IMR-90 (cell line): ENCODE measurements at regions of chrX and their contacts with region 1.

Region 1: DNA sequence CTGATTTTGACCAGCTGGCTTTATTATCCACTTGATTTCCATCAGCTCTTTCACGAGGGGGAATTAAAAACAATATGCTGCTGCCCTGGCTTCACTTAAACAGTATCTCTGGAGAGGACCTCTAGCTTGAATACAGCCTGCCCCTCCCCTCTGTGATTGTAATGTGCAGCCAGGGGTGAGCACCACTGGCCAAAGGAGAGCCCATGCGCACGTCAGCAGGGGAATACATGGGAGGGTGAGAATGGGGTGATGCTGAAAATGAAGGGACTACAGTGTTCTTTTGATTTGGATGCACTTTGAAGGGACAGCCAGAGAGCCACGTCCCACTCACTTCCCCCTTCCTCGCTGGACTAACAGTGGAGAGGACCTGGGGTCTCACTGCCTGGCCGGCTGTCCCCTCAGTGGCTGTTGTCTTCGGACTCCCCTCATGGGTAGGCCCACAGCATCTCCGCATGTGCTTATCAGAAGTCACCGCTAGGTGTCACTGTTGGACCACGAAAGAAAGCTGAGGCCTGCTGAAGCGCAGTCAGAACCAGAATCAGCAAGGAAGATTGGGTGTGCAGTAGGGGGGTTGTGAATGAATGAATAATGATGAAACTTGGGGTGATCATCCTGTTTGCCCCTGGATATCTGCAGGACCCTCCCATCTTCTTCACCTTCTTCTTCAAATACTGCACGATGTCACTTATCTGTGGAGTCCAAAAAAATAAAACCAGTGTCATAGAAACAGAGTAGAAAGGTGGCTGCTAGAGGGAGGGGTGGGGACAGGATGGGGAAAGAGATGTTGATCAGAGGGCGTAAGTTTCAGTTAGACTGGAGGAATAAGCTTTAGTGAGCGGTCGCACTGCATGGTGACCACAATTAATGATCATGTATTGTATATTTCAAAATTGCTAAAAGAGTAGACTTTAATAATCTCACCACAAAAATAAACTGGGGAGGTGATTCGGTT is 32.8 kb downstream of the CLCN4 start:
- DNase-seq: peak; percentile 63
- ATAC-seq: peak; percentile 94
- H3K4me3 ChIP-seq: no peak overlapping the region
- H3K27ac ChIP-seq: no peak overlapping the region
- H3K4me1 ChIP-seq: no peaks in the 10 kb centered on the region
- H3K27me3 ChIP-seq: no peaks in the 10 kb centered on the region
- CTCF ChIP-seq: peak; percentile 79
- POLR2A ChIP-seq: no peak
- RAD21 ChIP-seq: peak; percentile 90

Region 2: DNA sequence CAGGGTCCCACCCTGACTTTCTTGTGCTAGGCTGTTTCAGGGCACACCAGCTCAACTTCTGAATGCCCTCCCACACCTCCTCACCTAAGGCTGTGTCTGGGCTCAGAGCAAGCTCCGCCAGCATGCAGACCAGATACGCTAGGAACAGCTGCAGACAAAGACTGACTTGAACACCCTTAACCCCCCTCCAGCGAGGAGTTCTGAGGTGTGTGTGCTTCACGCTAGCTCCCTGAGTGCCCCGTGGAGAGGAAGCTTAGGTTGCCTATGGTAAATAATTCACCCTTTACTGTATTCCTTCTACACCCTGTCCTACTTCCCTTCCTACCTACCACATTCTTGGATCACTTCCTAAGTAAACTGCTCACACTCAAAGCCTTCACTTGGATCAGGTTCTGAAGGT is 1610.0 kb before region 1 on chrX:
- CTCF ChIA-PET with region 1: no interaction called
- POLR2A ChIA-PET with region 1: no interaction called
- dilution Hi-C with region 1: no loop called
- in situ Hi-C with region 1: no loop called
- intact Hi-C with region 1: no loop called
- DNase-seq: no peak
- ATAC-seq: no peak
- H3K4me3 ChIP-seq: no peak overlapping the region
- H3K27ac ChIP-seq: no peak overlapping the region
- H3K4me1 ChIP-seq: no peaks in the 10 kb centered on the region
- H3K27me3 ChIP-seq: no peaks in the 10 kb centered on the region
- CTCF ChIP-seq: no peak
- POLR2A ChIP-seq: no peak
- RAD21 ChIP-seq: no peak

Region 3: DNA sequence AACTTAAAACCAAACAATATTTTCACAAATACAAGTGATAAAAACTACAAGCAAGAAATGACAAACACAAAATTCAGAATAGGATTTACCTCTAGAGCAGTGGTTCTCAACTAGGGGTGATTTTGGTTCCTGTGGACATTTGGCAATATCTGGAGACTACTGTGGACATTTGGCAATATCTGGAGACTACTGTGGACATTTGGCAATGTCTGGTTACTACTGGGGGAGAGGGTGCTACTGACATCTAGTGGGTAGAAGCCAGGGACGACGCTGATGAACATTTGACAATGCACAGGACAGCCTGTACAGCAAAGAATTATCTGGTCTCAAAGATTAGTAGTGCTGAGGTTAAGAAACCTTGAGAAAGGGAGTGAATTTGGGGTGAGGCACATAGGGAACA is 137.0 kb after region 1 on chrX:
- CTCF ChIA-PET with region 1: no interaction called
- POLR2A ChIA-PET with region 1: no interaction called
- dilution Hi-C with region 1: no loop called
- in situ Hi-C with region 1: no loop called
- intact Hi-C with region 1: loop called (anchors 1 kb)
- DNase-seq: peak; percentile 43
- ATAC-seq: peak; percentile 60
- H3K4me3 ChIP-seq: no peak overlapping the region
- H3K27ac ChIP-seq: no peak overlapping the region
- H3K4me1 ChIP-seq: peaks cover 2% of the 10 kb centered on the region; the same call in 1 of the 2 replicates
- H3K27me3 ChIP-seq: no peaks in the 10 kb centered on the region; the same call in 1 of the 2 replicates
- CTCF ChIP-seq: peak; percentile 46
- POLR2A ChIP-seq: no peak
- RAD21 ChIP-seq: peak; percentile 50

Region 4: GRCh38 chrX:10615931-10616775 is 426.6 kb after region 1 on chrX:
- CTCF ChIA-PET with region 1: interaction called, 7 read pairs
- POLR2A ChIA-PET with region 1: no interaction called
- dilution Hi-C with region 1: no loop called
- in situ Hi-C with region 1: loop called (anchors 10 kb)
- intact Hi-C with region 1: loop called (anchors 5 kb)
- DNase-seq: peak; percentile 58
- ATAC-seq: no peak
- H3K4me3 ChIP-seq: no peak overlapping the region
- H3K27ac ChIP-seq: peak overlapping the region; percentile 22; the same call in 1 of the 2 replicates
- H3K4me1 ChIP-seq: peaks cover 7% of the 10 kb centered on the region
- H3K27me3 ChIP-seq: no peaks in the 10 kb centered on the region
- CTCF ChIP-seq: peak; percentile 58
- POLR2A ChIP-seq: no peak
- RAD21 ChIP-seq: peak; percentile 64

Region 5: GRCh38 chrX:10722851-10723250 is 533.3 kb after region 1 on chrX:
- CTCF ChIA-PET with region 1: interaction called, 9 read pairs
- POLR2A ChIA-PET with region 1: no interaction called
- dilution Hi-C with region 1: no loop called
- in situ Hi-C with region 1: no loop called
- intact Hi-C with region 1: loop called (anchors 1 kb)
- DNase-seq: peak; percentile 67
- ATAC-seq: peak; percentile 90
- H3K4me3 ChIP-seq: no peak overlapping the region
- H3K27ac ChIP-seq: no peak overlapping the region
- H3K4me1 ChIP-seq: 0 out of 2 replicates have a peak, but pooled peaks cover 1% of the 10 kb centered on the region
- H3K27me3 ChIP-seq: no peaks in the 10 kb centered on the region
- CTCF ChIP-seq: peak; percentile 78
- POLR2A ChIP-seq: no peak
- RAD21 ChIP-seq: peak; percentile 76

Region 6: GRCh38 chrX:11129534-11130105 is 940.0 kb after region 1 on chrX:
- CTCF ChIA-PET with region 1: interaction called, 5 read pairs
- POLR2A ChIA-PET with region 1: no interaction called
- dilution Hi-C with region 1: loop called (anchors 25 kb)
- in situ Hi-C with region 1: loop called (anchors 5 kb)
- intact Hi-C with region 1: no loop called
- DNase-seq: no peak
- ATAC-seq: no peak
- H3K4me3 ChIP-seq: no peak overlapping the region
- H3K27ac ChIP-seq: no peak overlapping the region
- H3K4me1 ChIP-seq: peaks cover 1% of the 10 kb centered on the region; the same call in 1 of the 2 replicates
- H3K27me3 ChIP-seq: no peaks in the 10 kb centered on the region
- CTCF ChIP-seq: no peak
- POLR2A ChIP-seq: no peak
- RAD21 ChIP-seq: no peak

Region 7: GRCh38 chrX:11143931-11144678 is 954.5 kb after region 1 on chrX:
- CTCF ChIA-PET with region 1: no interaction called
- POLR2A ChIA-PET with region 1: no interaction called
- dilution Hi-C with region 1: loop called (anchors 25 kb)
- in situ Hi-C with region 1: no loop called
- intact Hi-C with region 1: no loop called
- DNase-seq: peak; percentile 79
- ATAC-seq: peak; percentile 90
- H3K4me3 ChIP-seq: no peak overlapping the region
- H3K27ac ChIP-seq: no peak overlapping the region
- H3K4me1 ChIP-seq: no peaks in the 10 kb centered on the region
- H3K27me3 ChIP-seq: no peaks in the 10 kb centered on the region
- CTCF ChIP-seq: peak; percentile 71
- POLR2A ChIP-seq: no peak
- RAD21 ChIP-seq: peak; percentile 83

Region 8: DNA sequence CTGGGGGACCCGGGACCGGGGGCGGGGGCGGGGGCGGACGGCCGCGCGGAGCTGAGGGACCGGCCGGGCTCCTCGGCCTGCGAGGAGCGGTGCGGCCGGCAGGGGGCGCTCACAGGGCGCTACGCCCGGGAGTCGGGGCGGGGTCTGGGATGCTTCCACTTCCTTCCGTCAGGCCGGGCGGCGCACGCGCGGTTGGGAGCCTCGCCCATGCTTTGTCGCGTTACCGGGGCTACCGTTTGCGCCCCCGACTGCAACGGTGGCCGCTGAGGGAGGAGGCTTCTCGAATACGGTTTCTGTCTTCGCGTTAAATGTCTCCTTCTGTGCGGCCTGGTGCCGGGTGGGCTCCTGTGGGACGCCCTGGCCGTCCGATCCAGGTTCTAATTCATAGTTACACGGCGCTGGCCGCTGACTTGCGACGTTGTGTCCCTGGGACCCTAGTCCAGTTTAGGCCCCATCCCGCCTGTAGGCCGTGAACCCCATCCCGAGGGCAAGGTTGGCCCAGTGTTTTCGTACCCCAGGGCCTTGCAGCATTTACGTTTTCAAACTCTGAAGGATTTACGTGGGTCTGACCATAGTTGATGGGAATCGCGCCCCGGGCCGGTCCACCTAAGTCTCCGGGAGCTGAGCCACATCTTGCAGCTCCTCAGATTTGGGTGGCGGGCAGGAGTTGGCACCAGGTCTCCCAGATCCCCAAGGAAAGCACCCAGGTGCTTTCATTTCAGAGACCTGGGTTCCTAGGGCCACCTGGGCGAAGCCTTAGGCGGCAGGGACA is 1569.0 kb after region 1 on chrX:
- CTCF ChIA-PET with region 1: no interaction called
- POLR2A ChIA-PET with region 1: no interaction called
- dilution Hi-C with region 1: no loop called
- in situ Hi-C with region 1: loop called (anchors 25 kb)
- intact Hi-C with region 1: no loop called
- DNase-seq: peak; percentile 73
- ATAC-seq: peak; percentile 79
- H3K4me3 ChIP-seq: peak overlapping the region; percentile 97
- H3K27ac ChIP-seq: peak overlapping the region; percentile 98
- H3K4me1 ChIP-seq: no peaks in the 10 kb centered on the region
- H3K27me3 ChIP-seq: no peaks in the 10 kb centered on the region
- CTCF ChIP-seq: peak; percentile 62
- POLR2A ChIP-seq: no peak
- RAD21 ChIP-seq: no peak